Body of pancreas (tissue), 4 donors: ENCODE measurements at regions of chr4 and their contacts with region 1.

Region 1: GRCh38 chr4:99808260-99808857 is 8.3 kb upstream of the DAPP1 start:
- DNase-seq: peak; percentile 64 to 76 (median 72)
- ATAC-seq: peak; percentile 86
- H3K4me3 ChIP-seq: no peak overlapping the region
- H3K27ac ChIP-seq: no peak overlapping the region
- H3K4me1 ChIP-seq: no peaks in the 10 kb centered on the region
- H3K27me3 ChIP-seq: no peaks in the 10 kb centered on the region
- CTCF ChIP-seq: peak; percentile 49 to 86 (median 78)
- POLR2A ChIP-seq: no peak

Region 2: GRCh38 chr4:99563310-99564186 is 244.8 kb before region 1 on chr4 and contains the start of gene TRMT10A:
- intact Hi-C with region 1: loop called (anchors 10 kb)
- DNase-seq: peak; percentile 97 to 98 (median 98)
- ATAC-seq: peak; percentile 97
- H3K4me3 ChIP-seq: peak within 1 kb of the TSS; percentile 8 to 24
- H3K27ac ChIP-seq: peak within 1 kb of the TSS; percentile 82 to 97 (median 94)
- H3K4me1 ChIP-seq: peaks cover 6% of the 10 kb centered on the region
- H3K27me3 ChIP-seq: no peaks in the 10 kb centered on the region
- CTCF ChIP-seq: peak in 4 of 7 experiments; percentile 22 to 25 (median 22)
- POLR2A ChIP-seq: peak; percentile 68 to 91 (median 88)
- total RNA-seq, gene TRMT10A: 3.3 to 21.8 TPM

Region 3: DNA sequence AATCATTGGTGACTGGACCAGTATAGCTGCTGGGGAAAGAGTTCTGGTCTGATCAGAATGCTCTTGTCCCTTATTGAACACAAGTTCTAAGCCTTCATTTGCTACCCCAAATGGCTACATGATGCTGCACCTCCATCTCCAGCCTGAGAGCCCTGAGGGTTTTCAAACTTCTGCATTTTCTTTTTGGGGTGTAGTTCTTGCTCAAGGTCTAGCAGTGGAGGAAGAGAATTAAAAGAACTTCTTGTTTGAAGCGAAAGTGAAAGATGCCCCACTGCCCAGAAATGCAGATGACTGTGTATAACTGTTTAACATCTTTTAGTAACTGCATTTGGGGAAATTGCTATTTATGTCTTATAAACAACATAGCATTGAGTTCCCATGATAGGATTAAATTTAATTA is 47.3 kb after region 1 on chr4:
- intact Hi-C with region 1: no loop called
- DNase-seq: peak in 1 of 4 donors; percentile 11
- ATAC-seq: no peak
- H3K4me3 ChIP-seq: no peak overlapping the region
- H3K27ac ChIP-seq: no peak overlapping the region
- H3K4me1 ChIP-seq: peaks cover 7% of the 10 kb centered on the region
- H3K27me3 ChIP-seq: no peaks in the 10 kb centered on the region
- CTCF ChIP-seq: no peak
- POLR2A ChIP-seq: no peak

Region 4: DNA sequence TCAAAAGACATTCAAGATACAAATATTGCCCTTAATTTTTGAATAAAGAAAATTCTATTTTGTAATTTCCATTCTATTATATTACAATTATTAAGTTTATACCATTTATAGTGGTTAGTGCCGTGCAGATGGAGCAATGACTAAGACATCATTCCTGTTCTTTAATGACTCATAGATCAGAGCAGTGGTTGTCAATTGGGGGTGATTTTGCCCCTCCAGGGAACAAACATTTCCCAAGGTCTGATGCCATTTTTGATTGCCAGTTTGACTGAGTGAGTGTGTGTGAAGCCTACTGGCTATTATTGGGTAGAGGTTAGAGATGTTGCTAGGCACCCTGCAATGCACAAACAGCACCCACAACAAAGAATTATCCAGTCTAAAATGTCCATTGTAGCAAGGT is 479.8 kb after region 1 on chr4:
- intact Hi-C with region 1: no loop called
- DNase-seq: no peak
- ATAC-seq: no peak
- H3K4me3 ChIP-seq: no peak overlapping the region
- H3K27ac ChIP-seq: no peak overlapping the region
- H3K4me1 ChIP-seq: no peaks in the 10 kb centered on the region
- H3K27me3 ChIP-seq: no peaks in the 10 kb centered on the region
- CTCF ChIP-seq: no peak
- POLR2A ChIP-seq: no peak